Natural killer cell (primary cell): ENCODE measurements at regions of chr19 and their contacts with region 1.

Region 1: DNA sequence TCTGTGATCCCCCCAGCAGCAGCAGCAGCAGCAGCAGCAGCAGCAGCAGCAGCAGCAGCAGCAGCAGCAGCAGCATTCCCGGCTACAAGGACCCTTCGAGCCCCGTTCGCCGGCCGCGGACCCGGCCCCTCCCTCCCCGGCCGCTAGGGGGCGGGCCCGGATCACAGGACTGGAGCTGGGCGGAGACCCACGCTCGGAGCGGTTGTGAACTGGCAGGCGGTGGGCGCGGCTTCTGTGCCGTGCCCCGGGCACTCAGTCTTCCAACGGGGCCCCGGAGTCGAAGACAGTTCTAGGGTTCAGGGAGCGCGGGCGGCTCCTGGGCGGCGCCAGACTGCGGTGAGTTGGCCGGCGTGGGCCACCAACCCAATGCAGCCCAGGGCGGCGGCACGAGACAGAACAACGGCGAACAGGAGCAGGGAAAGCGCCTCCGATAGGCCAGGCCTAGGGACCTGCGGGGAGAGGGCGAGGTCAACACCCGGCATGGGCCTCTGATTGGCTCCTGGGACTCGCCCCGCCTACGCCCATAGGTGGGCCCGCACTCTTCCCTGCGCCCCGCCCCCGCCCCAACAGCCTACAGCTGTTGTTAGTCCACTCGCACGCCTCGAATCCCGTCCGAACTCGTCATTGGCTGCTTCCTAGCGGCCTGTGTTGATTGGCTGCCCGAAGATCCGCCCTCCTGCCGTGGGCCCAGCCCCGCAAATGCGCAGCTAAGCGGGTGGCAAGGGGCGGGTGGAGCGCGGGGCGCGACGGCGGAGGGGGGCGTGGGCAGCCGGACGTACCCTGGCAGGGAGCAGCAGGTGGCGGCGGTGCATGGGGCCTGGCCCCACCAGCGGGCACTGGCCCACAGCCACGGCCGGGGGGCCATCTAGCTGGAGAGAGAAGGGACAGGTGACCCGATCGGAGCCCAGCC is 1.4 kb upstream of the SIX5 start:
- DNase-seq: peak; percentile 91 to 95
- ATAC-seq: peak; percentile 73 to 89 (median 74)
- H3K4me3 ChIP-seq: peak overlapping the region; percentile 45
- H3K4me3 Mint-ChIP-seq: peak overlapping the region; percentile 90
- H3K27ac ChIP-seq: peak overlapping the region; percentile 61
- H3K27ac Mint-ChIP-seq: peak overlapping the region; percentile 91 to 92
- H3K4me1 ChIP-seq: peaks cover 31% of the 10 kb centered on the region
- H3K4me1 Mint-ChIP-seq: peaks cover 5 to 28% of the 10 kb centered on the region in 2 donors
- H3K27me3 ChIP-seq: peaks cover 10% of the 10 kb centered on the region
- H3K27me3 Mint-ChIP-seq: no peaks in the 10 kb centered on the region
- CTCF ChIP-seq: peak; percentile 99

Region 2: GRCh38 chr19:45792470-45793177 is 22.2 kb after region 1 on chr19 and contains the start of gene DMWD:
- intact Hi-C with region 1: loop called (anchors 1 kb)
- DNase-seq: peak; percentile 99
- ATAC-seq: peak; percentile 96 to 99 (median 96)
- H3K4me3 ChIP-seq: peak within 1 kb of the TSS; percentile 42
- H3K4me3 Mint-ChIP-seq: peak within 1 kb of the TSS; percentile 91
- H3K27ac ChIP-seq: peak within 1 kb of the TSS; percentile 68
- H3K27ac Mint-ChIP-seq: peak within 1 kb of the TSS; percentile 86 to 98
- H3K4me1 ChIP-seq: peaks cover 32% of the 10 kb centered on the region
- H3K4me1 Mint-ChIP-seq: peaks cover 34 to 47% of the 10 kb centered on the region in 2 donors
- H3K27me3 ChIP-seq: peaks cover 5% of the 10 kb centered on the region
- H3K27me3 Mint-ChIP-seq: peaks cover 0 to 5% of the 10 kb centered on the region in 2 donors
- CTCF ChIP-seq: no peak
- total RNA-seq, gene DMWD: 66.2 to 82.1 (median 66.3) TPM

Region 3: DNA sequence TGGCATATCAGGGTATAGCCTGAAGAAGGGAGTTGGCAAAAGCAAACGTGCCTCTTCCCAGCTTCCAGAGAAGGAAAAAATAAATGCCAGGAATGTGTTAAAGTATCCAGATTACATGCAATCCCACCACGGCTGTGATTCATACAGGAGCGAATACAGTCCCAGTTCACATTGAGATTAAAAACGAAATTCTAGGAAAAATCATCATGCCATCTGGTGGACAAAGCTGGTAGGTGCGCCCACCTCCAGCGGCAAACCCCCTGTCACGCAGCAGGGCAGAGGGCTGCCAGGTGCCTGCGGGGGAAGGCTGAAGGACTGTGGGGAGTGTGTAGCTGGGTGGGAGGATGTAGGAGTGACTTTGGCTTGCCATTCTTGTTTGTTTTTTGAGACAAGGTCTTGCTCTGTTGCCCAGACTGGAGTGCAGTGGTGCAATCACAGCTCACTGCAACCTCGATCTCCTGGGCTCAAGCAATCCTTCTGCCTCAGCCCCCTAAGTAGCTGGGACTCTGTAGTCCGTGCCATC is 28.6 kb after region 1 on chr19:
- intact Hi-C with region 1: loop called (anchors 1 kb)
- DNase-seq: peak; percentile 55 to 83
- ATAC-seq: peak; percentile 77 to 96 (median 88)
- H3K4me3 ChIP-seq: no peak overlapping the region
- H3K4me3 Mint-ChIP-seq: no peak overlapping the region
- H3K27ac ChIP-seq: no peak overlapping the region
- H3K27ac Mint-ChIP-seq: no peak overlapping the region
- H3K4me1 ChIP-seq: no peaks in the 10 kb centered on the region
- H3K4me1 Mint-ChIP-seq: peaks cover under 1 to 5% of the 10 kb centered on the region in 2 donors
- H3K27me3 ChIP-seq: peaks cover 5% of the 10 kb centered on the region
- H3K27me3 Mint-ChIP-seq: peaks cover 0 to 18% of the 10 kb centered on the region in 2 donors
- CTCF ChIP-seq: peak; percentile 86

Region 4: DNA sequence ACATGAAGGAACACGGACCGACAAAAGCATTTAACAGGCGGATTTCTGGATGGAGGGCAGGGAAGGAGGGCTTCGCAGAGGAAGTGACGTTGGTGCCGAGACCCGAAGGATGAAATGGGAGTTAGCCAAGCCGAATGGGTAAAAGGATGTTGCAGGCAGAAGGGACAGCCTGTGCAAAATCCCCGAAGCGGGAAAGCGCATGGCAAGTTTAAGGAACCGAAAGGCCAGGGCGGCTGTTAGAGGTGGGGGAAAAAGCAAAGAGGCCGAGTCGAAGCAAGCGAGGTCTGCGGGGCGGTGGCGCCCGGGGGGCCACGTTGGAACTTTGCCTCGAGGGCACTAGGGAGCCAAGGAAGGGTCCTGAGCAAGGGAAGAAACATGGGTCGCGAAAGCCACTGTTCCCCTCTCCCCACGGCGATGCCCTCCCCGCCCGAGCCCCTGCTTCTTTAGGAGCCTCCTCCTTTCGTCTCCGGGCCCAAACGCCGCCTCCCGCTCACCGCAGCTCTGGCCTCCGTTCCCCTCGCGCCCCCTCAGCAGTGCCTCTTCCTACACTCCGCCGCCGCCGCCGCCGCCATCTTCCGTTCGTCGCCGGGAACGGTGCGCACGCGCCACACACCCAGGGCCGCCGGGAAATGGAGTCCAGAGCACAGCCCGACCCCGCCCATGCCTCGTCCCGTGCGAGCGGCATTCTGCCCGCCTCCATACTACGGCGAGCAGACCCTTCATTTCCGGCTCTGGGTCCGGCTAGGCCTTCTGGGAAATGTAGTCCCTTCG is 92.3 kb after region 1 on chr19 and contains the start of gene SYMPK:
- intact Hi-C with region 1: loop called (anchors 10 kb)
- DNase-seq: peak; percentile 96 to 99
- ATAC-seq: peak; percentile 97 to 99 (median 97)
- H3K4me3 ChIP-seq: peak within 1 kb of the TSS; percentile 96
- H3K4me3 Mint-ChIP-seq: peak within 1 kb of the TSS; percentile 99
- H3K27ac ChIP-seq: peak within 1 kb of the TSS; percentile 94
- H3K27ac Mint-ChIP-seq: peak within 1 kb of the TSS; percentile 91 to 96
- H3K4me1 ChIP-seq: peaks cover 24% of the 10 kb centered on the region
- H3K4me1 Mint-ChIP-seq: peaks cover 21 to 43% of the 10 kb centered on the region in 2 donors
- H3K27me3 ChIP-seq: peaks cover 11% of the 10 kb centered on the region
- H3K27me3 Mint-ChIP-seq: peaks cover 16 to 24% of the 10 kb centered on the region in 2 donors
- CTCF ChIP-seq: no peak
- total RNA-seq, gene SYMPK: 86.4 to 94.8 (median 86.7) TPM

Region 5: GRCh38 chr19:45886427-45887199 is 116.2 kb after region 1 on chr19:
- intact Hi-C with region 1: loop called (anchors 2 kb)
- DNase-seq: peak; percentile 87 to 96
- ATAC-seq: peak; percentile 69 to 86 (median 73)
- H3K4me3 ChIP-seq: peak overlapping the region; percentile 72
- H3K4me3 Mint-ChIP-seq: peak overlapping the region; percentile 98
- H3K27ac ChIP-seq: peak overlapping the region; percentile 86
- H3K27ac Mint-ChIP-seq: peak overlapping the region; percentile 96 to 97
- H3K4me1 ChIP-seq: peaks cover 37% of the 10 kb centered on the region
- H3K4me1 Mint-ChIP-seq: peaks cover 17 to 32% of the 10 kb centered on the region in 2 donors
- H3K27me3 ChIP-seq: no peaks in the 10 kb centered on the region
- H3K27me3 Mint-ChIP-seq: peaks cover 0 to 3% of the 10 kb centered on the region in 2 donors
- CTCF ChIP-seq: no peak

Region 6: DNA sequence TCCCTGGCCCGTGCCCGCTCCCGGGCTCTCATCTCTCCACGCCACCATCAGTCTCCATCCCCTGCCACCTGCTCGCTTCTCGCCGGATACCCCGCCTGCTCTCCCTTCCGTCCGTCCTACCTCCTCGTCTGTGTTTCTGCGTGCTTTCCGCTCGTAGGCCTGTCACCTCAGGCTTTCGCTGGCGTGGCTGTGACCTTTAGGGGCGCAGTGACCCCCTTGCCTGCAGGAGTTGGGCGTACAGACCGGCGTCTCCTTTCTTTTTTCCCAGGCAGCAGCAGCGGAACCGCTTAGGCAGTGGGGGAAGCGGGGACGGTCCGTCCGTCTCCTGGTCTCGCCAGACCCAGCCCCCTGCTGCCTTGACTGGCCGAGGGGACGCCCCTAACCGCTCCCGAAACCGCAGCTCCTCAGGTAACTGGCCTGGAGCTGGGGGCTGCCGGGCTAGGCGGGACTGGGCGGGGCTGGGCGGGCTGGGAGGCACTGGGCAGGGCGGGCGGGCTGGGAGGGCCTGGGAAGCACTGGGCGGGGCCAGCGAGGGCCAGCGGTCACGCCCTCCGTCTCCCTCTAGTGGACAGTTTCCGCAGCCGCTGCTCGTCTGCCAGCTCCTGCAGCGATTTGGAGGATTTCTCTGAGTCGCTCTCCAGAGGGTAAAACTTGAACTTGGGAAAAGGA is 246.1 kb after region 1 on chr19:
- intact Hi-C with region 1: loop called (anchors 10 kb)
- DNase-seq: peak; percentile 79 to 93
- ATAC-seq: peak; percentile 80 to 90 (median 81)
- H3K4me3 ChIP-seq: peak overlapping the region; percentile 89
- H3K4me3 Mint-ChIP-seq: peak overlapping the region; percentile 96
- H3K27ac ChIP-seq: no peak overlapping the region
- H3K27ac Mint-ChIP-seq: peak overlapping the region; percentile 61 to 74
- H3K4me1 ChIP-seq: peaks cover 24% of the 10 kb centered on the region
- H3K4me1 Mint-ChIP-seq: peaks cover 12 to 24% of the 10 kb centered on the region in 2 donors
- H3K27me3 ChIP-seq: peaks cover 5% of the 10 kb centered on the region
- H3K27me3 Mint-ChIP-seq: peaks cover 0 to 9% of the 10 kb centered on the region in 2 donors
- CTCF ChIP-seq: peak; percentile 87